ENCODE measurements at regions of chr3 and their contacts with region 1.

Region 1: GRCh38 chr3:58305882-58306711 is at the starts of genes HTD2 and RPP14:
- DNase-seq: peak; percentile 97
- H3K4me3 Mint-ChIP-seq: peak within 1 kb of the TSS; percentile 96
- H3K27ac Mint-ChIP-seq: peak within 1 kb of the TSS; percentile 99
- H3K4me1 Mint-ChIP-seq: no peaks in the 10 kb centered on the region
- H3K27me3 Mint-ChIP-seq: peaks cover 8% of the 10 kb centered on the region
- CTCF ChIP-seq: peak; percentile 66
- total RNA-seq, gene HTD2: 10.1 and 11.5 TPM in 2 replicates
- total RNA-seq, gene RPP14: 19.0 and 20.0 TPM in 2 replicates

Region 2: DNA sequence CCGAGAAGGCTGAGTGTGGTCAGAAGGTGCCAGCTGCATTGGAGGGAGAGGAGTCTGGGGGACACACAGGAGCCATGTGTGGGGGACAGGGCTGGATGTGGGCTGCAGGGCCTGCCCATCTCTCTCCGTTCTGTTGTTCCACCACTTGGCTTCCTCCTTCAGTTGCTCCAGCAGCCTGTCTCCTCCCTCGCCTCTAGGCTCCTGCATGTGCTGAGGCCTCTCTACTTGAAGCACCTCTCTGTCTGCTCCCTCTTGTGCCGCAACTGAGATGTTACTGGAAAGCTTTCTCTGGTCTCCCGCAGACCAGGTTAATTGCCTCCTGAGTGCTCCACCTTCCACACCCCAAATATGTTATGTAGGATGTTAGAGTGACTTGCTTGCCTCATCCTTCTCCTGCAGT is 176.0 kb before region 1 on chr3:
- CTCF ChIA-PET with region 1: no interaction called
- POLR2A ChIA-PET with region 1: no interaction called
- intact Hi-C with region 1: no loop called
- DNase-seq: no peak
- H3K4me3 Mint-ChIP-seq: no peak overlapping the region
- H3K27ac Mint-ChIP-seq: no peak overlapping the region
- H3K4me1 Mint-ChIP-seq: no peaks in the 10 kb centered on the region
- H3K27me3 Mint-ChIP-seq: no peaks in the 10 kb centered on the region
- CTCF ChIP-seq: no peak

Region 3: GRCh38 chr3:58188173-58188564 is 117.9 kb before region 1 on chr3:
- CTCF ChIA-PET with region 1: interaction called, 254 read pairs
- POLR2A ChIA-PET with region 1: interaction called, 71 read pairs
- intact Hi-C with region 1: no loop called
- DNase-seq: peak; percentile 86
- H3K4me3 Mint-ChIP-seq: no peak overlapping the region
- H3K27ac Mint-ChIP-seq: no peak overlapping the region
- H3K4me1 Mint-ChIP-seq: peaks cover 9% of the 10 kb centered on the region
- H3K27me3 Mint-ChIP-seq: no peaks in the 10 kb centered on the region
- CTCF ChIP-seq: no peak

Region 4: GRCh38 chr3:58237238-58237940 is 68.7 kb before region 1 on chr3 and contains the start of gene ABHD6:
- CTCF ChIA-PET with region 1: interaction called, 12 read pairs
- POLR2A ChIA-PET with region 1: interaction called, 12 read pairs
- intact Hi-C with region 1: no loop called
- DNase-seq: peak; percentile 69
- H3K4me3 Mint-ChIP-seq: peak within 1 kb of the TSS; percentile 87
- H3K27ac Mint-ChIP-seq: peak within 1 kb of the TSS; percentile 75
- H3K4me1 Mint-ChIP-seq: peaks cover 23% of the 10 kb centered on the region
- H3K27me3 Mint-ChIP-seq: peaks cover 6% of the 10 kb centered on the region
- CTCF ChIP-seq: peak; percentile 18
- total RNA-seq, gene ABHD6: 3.4 and 3.9 TPM in 2 replicates

Region 5: DNA sequence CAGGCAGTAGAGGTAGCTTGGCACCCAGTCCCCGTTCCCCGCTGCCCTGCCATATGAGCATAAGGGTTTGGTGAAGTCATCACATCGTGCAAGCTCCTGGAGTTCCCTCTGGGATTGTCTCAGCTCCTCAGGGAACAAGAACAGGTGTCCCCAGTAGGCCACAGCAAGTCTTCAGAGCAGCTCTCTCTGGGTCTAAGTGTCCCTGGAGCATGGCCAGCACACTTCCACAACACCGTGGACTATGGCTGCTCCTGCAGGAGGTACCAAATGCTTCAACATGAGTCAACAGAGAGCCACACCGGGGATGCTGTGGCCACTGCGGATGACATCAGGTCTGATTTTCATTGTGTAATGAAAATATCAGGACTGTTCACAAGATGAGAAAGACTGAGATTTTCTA is 45.4 kb before region 1 on chr3:
- CTCF ChIA-PET with region 1: no interaction called
- POLR2A ChIA-PET with region 1: no interaction called
- intact Hi-C with region 1: no loop called
- DNase-seq: peak; percentile 22
- H3K4me3 Mint-ChIP-seq: no peak overlapping the region
- H3K27ac Mint-ChIP-seq: no peak overlapping the region
- H3K4me1 Mint-ChIP-seq: peaks cover 5% of the 10 kb centered on the region
- H3K27me3 Mint-ChIP-seq: no peaks in the 10 kb centered on the region
- CTCF ChIP-seq: no peak

Region 6: GRCh38 chr3:58317811-58318210 is 11.7 kb after region 1 on chr3:
- CTCF ChIA-PET with region 1: interaction called, 46 read pairs
- POLR2A ChIA-PET with region 1: interaction called, 15 read pairs
- intact Hi-C with region 1: no loop called
- DNase-seq: no peak
- H3K4me3 Mint-ChIP-seq: no peak overlapping the region
- H3K27ac Mint-ChIP-seq: no peak overlapping the region
- H3K4me1 Mint-ChIP-seq: no peaks in the 10 kb centered on the region
- H3K27me3 Mint-ChIP-seq: no peaks in the 10 kb centered on the region
- CTCF ChIP-seq: no peak

Region 7: DNA sequence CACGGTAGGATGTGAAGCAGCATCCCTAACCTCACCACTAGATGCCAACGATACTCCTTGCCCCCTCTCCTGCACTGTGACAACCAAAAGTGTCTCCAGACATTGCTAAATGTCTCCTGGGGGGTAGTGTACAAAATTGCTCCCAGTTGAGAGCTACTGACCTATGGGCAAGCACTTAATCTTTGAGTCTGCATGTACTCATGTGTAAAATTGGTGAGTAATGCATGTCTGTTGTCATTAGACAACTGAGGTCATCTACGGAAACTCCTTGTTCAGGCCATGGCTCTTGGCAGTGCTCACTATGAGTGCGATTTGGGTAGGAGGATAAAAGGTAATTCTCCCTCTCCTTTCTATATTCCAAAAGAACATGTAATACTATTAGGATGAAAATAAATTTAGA is 98.3 kb after region 1 on chr3:
- CTCF ChIA-PET with region 1: interaction called, 10 read pairs
- POLR2A ChIA-PET with region 1: interaction called, 5 read pairs
- intact Hi-C with region 1: no loop called
- DNase-seq: peak; percentile 44
- H3K4me3 Mint-ChIP-seq: no peak overlapping the region
- H3K27ac Mint-ChIP-seq: no peak overlapping the region
- H3K4me1 Mint-ChIP-seq: peaks cover 10% of the 10 kb centered on the region
- H3K27me3 Mint-ChIP-seq: no peaks in the 10 kb centered on the region
- CTCF ChIP-seq: no peak

Region 8: DNA sequence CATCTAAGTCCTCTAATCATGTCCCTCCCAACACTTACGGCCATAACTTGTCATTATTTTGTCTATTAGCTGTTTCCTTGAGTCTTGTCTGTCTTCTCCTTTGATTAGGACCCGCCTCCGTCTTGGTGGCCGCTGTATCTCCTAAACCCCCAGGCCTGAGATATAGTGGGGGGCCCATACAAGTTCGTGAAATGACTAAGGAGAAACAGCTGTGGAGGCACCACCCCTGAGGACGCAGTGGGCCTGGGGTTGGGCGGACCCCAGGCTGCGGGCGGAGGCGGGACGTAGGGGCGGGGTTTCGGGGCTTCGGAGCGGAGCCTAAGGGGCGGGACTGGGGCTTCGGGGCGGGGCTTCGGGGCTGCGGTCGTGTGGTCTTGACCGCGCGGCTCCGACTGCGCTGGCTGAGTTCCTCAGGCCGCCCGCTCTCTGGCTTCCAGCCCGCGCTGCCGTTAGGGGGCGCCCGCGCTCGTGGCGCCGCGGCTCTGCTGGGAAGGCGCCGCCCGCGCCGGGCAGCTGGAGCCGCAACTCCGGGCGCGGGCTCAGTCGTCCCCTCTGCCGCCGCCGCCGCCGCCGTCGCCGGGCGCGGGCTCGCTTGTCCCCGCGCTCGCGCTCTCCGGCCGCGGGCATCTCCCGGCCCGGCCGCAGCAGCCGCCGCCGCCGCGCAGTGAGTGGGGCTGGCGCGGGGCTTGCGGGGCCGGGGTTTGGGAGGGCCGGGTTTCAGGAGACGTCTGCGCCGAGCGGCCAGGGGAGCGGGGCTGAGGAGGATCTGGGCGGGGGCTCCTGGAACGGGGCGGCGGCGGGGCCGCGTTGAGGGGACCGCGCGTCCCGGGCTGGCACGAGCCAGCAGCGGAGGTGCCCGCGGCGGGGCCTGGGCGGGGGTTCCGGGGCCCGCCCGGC is 185.7 kb after region 1 on chr3 and contains the start of gene KCTD6:
- CTCF ChIA-PET with region 1: interaction called, 6 read pairs
- POLR2A ChIA-PET with region 1: interaction called, 12 read pairs
- intact Hi-C with region 1: no loop called
- DNase-seq: peak; percentile 91
- H3K4me3 Mint-ChIP-seq: peak within 1 kb of the TSS; percentile 78
- H3K27ac Mint-ChIP-seq: peak within 1 kb of the TSS; percentile 50
- H3K4me1 Mint-ChIP-seq: peaks cover 33% of the 10 kb centered on the region
- H3K27me3 Mint-ChIP-seq: no peaks in the 10 kb centered on the region
- CTCF ChIP-seq: peak; percentile 73
- total RNA-seq, gene KCTD6: 9.9 and 10.6 TPM in 2 replicates

Measured in MCF 10A (cell line).